ENCODE measurements at regions of chr18 and their contacts with region 1.

Region 1: DNA sequence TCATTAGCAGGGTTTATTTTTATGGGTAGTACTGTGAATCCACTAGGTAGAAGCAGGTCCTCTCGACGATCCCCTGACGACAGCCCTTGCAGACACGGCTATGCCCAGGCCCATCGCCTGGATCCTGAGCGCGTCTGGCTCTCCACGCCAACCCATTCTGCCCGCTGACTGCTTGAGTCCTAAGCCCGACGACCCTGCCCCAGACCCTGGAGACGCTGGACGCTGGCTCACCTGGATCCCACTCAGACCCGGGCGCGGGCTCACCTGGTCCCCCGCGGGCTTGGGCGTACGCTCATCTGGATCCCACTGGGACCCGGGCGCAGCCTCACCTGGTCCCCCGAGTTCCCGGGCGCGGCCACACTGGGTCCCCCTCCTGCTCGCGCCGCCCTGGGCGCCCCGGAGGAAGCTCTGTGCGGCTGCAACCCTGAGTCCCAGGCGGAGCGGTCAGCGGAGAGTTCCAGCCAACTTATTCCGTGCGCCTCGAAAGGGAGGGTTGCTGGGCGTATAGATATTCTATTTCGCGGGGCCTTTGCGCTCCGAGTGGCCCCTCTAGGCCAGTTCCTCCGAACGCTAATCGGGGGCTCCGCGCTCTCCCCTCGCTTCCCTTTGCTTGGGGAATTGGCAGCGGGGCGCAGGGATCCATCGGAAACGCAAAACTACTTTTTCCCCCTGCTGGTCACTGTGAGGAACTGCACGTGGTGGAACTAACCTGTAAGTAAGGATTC is 22.4 kb upstream of the RMP24 start:
- DNase-seq: peak; percentile 80
- ATAC-seq: peak; percentile 85
- H3K4me3 Mint-ChIP-seq: peak overlapping the region; percentile 79
- H3K27ac Mint-ChIP-seq: peak overlapping the region; percentile 81
- H3K4me1 Mint-ChIP-seq: peaks cover 37% of the 10 kb centered on the region
- H3K27me3 Mint-ChIP-seq: no peaks in the 10 kb centered on the region
- CTCF ChIP-seq: peak; percentile 98

Region 2: GRCh38 chr18:35756506-35757117 is 193.5 kb before region 1 on chr18:
- CTCF ChIA-PET with region 1: interaction called, 28 read pairs
- POLR2A ChIA-PET with region 1: interaction called, 3 read pairs
- DNase-seq: peak; percentile 63
- ATAC-seq: peak; percentile 85
- H3K4me3 Mint-ChIP-seq: no peak overlapping the region
- H3K27ac Mint-ChIP-seq: no peak overlapping the region
- H3K4me1 Mint-ChIP-seq: peaks cover 26% of the 10 kb centered on the region
- H3K27me3 Mint-ChIP-seq: no peaks in the 10 kb centered on the region; the same call in 1 of the 2 replicates
- CTCF ChIP-seq: peak; percentile 76; the same call in 1 of the 2 replicates

Region 3: GRCh38 chr18:35851286-35851970 is 98.6 kb before region 1 on chr18:
- CTCF ChIA-PET with region 1: interaction called, 17 read pairs
- POLR2A ChIA-PET with region 1: no interaction called
- DNase-seq: peak; percentile 38
- ATAC-seq: peak; percentile 77
- H3K4me3 Mint-ChIP-seq: peak overlapping the region; percentile 26
- H3K27ac Mint-ChIP-seq: no peak overlapping the region; the same call in 1 of the 2 replicates
- H3K4me1 Mint-ChIP-seq: peaks cover 31% of the 10 kb centered on the region
- H3K27me3 Mint-ChIP-seq: peaks cover 7% of the 10 kb centered on the region
- CTCF ChIP-seq: no peak

Region 4: GRCh38 chr18:35917044-35917443 is 33.0 kb before region 1 on chr18:
- CTCF ChIA-PET with region 1: interaction called, 19 read pairs
- POLR2A ChIA-PET with region 1: no interaction called
- DNase-seq: no peak
- ATAC-seq: peak; percentile 66
- H3K4me3 Mint-ChIP-seq: no peak overlapping the region
- H3K27ac Mint-ChIP-seq: 0 out of 2 replicates have a peak overlapping the region, but pooled peaks have one; percentile 17
- H3K4me1 Mint-ChIP-seq: peaks cover 20% of the 10 kb centered on the region
- H3K27me3 Mint-ChIP-seq: no peaks in the 10 kb centered on the region
- CTCF ChIP-seq: no peak

Region 5: DNA sequence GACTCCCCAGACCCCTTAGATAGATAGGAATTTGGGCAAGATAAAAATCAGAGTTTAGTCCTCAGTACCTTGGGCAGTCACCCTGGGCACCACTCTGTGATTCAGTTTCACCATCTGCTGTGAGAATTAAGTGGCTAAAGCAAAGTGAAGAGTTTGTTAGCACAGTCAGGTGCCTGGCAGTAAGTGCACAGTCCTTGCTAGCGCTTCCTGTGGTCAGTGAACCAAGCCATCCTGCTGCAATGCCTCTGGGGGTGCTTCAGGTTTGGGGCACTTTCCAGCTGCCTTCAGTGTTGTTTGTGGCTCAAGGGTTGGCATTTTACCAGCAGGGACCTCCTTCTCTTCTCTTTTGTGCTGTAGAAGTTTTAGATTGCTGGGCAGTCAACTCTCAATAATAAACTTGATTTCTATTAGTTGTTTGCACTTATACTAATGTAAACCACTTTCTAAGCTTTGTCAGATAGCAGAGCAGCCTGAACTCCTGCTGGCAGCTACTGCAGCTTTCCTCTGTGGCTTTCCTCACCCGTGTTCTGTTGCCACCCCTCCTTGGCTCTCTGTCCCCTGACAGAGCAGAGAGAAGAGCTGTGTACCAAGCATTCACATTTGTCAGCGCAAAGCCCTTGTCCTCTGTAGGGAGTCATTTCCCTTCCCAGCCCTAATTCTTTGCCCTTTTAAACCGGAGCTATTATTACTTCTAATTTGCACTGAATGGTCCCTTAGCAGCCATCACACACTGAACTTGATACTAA is 26.0 kb before region 1 on chr18:
- CTCF ChIA-PET with region 1: interaction called, 17 read pairs
- POLR2A ChIA-PET with region 1: no interaction called
- DNase-seq: no peak
- ATAC-seq: peak; percentile 70
- H3K4me3 Mint-ChIP-seq: no peak overlapping the region
- H3K27ac Mint-ChIP-seq: peak overlapping the region; percentile 21; the same call in 1 of the 2 replicates
- H3K4me1 Mint-ChIP-seq: peaks cover 26% of the 10 kb centered on the region
- H3K27me3 Mint-ChIP-seq: no peaks in the 10 kb centered on the region
- CTCF ChIP-seq: no peak

Region 6: GRCh38 chr18:35939138-35939537 is 10.9 kb before region 1 on chr18:
- CTCF ChIA-PET with region 1: interaction called, 39 read pairs
- POLR2A ChIA-PET with region 1: interaction called, 3 read pairs
- DNase-seq: peak; percentile 44
- ATAC-seq: peak; percentile 97
- H3K4me3 Mint-ChIP-seq: no peak overlapping the region
- H3K27ac Mint-ChIP-seq: peak overlapping the region; percentile 19; the same call in 1 of the 2 replicates
- H3K4me1 Mint-ChIP-seq: peaks cover 27% of the 10 kb centered on the region
- H3K27me3 Mint-ChIP-seq: no peaks in the 10 kb centered on the region
- CTCF ChIP-seq: peak; percentile 33; the same call in 1 of the 2 replicates

Region 7: GRCh38 chr18:35972197-35973052 is 22.4 kb after region 1 on chr18 and contains the start of gene RMP24:
- CTCF ChIA-PET with region 1: interaction called, 15 read pairs
- POLR2A ChIA-PET with region 1: interaction called, 3 read pairs
- DNase-seq: peak; percentile 94
- ATAC-seq: peak; percentile 95
- H3K4me3 Mint-ChIP-seq: peak within 1 kb of the TSS; percentile 98
- H3K27ac Mint-ChIP-seq: peak within 1 kb of the TSS; percentile 95
- H3K4me1 Mint-ChIP-seq: peaks cover 21% of the 10 kb centered on the region
- H3K27me3 Mint-ChIP-seq: peaks cover 5% of the 10 kb centered on the region
- CTCF ChIP-seq: no peak

Measured in WTC11 (cell line).